ENCODE measurements at regions of chr5 and their contacts with region 1.

Region 1: DNA sequence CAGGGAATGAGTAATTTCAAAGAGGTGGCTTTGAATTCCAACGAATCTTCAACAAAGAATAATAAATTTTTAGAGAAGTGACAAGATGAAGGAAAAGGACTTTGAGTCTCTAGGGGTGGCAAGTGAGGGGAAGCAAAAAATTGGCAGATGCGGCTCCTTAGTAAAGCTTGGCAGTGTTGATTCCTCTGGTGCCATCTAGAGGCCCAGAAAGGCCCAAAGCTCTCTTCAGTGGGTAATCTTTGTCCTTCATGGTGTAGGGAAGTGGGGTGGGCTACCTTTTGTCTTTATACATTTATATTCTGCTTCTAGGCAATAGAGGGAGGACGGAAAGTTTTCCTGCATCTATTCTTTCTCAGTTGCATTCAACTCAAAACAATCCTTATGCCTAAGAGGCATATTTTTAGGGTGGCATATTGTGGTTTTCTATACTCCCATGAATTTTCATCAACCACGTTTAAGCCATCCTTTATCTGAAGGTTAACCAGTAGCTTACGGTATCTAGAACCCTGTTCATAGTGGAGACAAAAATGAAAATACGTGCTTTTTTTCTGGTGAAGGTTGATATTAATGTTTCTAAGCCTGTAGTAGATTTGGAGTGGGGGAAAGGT is 17.5 kb upstream of the ROPN1L start:
- DNase-seq: no peak
- ATAC-seq: peak; percentile 61
- H3K4me3 Mint-ChIP-seq: no peak overlapping the region
- H3K27ac Mint-ChIP-seq: no peak overlapping the region
- H3K4me1 Mint-ChIP-seq: peaks cover 28% of the 10 kb centered on the region
- H3K27me3 Mint-ChIP-seq: no peaks in the 10 kb centered on the region
- CTCF ChIP-seq: no peak

Region 2: GRCh38 chr5:10009802-10010201 is 414.4 kb before region 1 on chr5:
- CTCF ChIA-PET with region 1: no interaction called
- POLR2A ChIA-PET with region 1: no interaction called
- intact Hi-C with region 1: no loop called
- DNase-seq: no peak
- ATAC-seq: no peak
- H3K4me3 Mint-ChIP-seq: no peak overlapping the region
- H3K27ac Mint-ChIP-seq: no peak overlapping the region
- H3K4me1 Mint-ChIP-seq: no peaks in the 10 kb centered on the region
- H3K27me3 Mint-ChIP-seq: no peaks in the 10 kb centered on the region
- CTCF ChIP-seq: no peak

Region 3: GRCh38 chr5:10441083-10441991 is 17.1 kb after region 1 on chr5 and contains the start of gene ROPN1L:
- CTCF ChIA-PET with region 1: no interaction called
- POLR2A ChIA-PET with region 1: no interaction called
- intact Hi-C with region 1: loop called (anchors 2 kb)
- DNase-seq: peak; percentile 84
- ATAC-seq: peak; percentile 96
- H3K4me3 Mint-ChIP-seq: peak within 1 kb of the TSS; percentile 88
- H3K27ac Mint-ChIP-seq: peak within 1 kb of the TSS; percentile 9
- H3K4me1 Mint-ChIP-seq: peaks cover 37% of the 10 kb centered on the region
- H3K27me3 Mint-ChIP-seq: peaks cover 3% of the 10 kb centered on the region
- CTCF ChIP-seq: no peak
- total RNA-seq, gene ROPN1L: 0.49 TPM in 1 of 2 replicates, not detected in the other

Region 4: DNA sequence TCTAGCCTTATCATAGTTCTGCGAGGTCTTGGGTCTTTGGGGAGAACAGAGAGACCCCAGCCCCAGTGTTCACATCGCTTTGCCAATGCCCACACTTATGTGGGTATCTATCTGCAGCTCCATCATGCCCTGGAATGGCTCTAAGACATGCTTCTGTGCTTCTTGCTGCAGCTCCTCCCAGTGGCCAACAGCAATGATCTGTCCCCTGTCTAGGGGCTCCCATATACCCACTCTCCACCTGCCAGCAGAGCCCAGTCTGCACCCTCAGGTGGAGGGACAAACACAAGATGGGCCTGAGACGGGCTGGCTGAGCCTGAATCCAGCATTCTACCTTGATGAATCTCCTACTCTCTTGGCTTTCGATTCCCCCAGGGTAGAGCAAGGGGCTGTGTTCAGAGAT is 351.4 kb after region 1 on chr5:
- CTCF ChIA-PET with region 1: no interaction called
- POLR2A ChIA-PET with region 1: no interaction called
- intact Hi-C with region 1: no loop called
- DNase-seq: no peak
- ATAC-seq: no peak
- H3K4me3 Mint-ChIP-seq: no peak overlapping the region
- H3K27ac Mint-ChIP-seq: no peak overlapping the region
- H3K4me1 Mint-ChIP-seq: no peaks in the 10 kb centered on the region
- H3K27me3 Mint-ChIP-seq: peaks cover 8% of the 10 kb centered on the region
- CTCF ChIP-seq: no peak